Activated B cell treated with CpG ODN at 0.5 μM for 24 hours (primary cell): ENCODE measurements at regions of chr9 and their contacts with region 1.

Region 1: DNA sequence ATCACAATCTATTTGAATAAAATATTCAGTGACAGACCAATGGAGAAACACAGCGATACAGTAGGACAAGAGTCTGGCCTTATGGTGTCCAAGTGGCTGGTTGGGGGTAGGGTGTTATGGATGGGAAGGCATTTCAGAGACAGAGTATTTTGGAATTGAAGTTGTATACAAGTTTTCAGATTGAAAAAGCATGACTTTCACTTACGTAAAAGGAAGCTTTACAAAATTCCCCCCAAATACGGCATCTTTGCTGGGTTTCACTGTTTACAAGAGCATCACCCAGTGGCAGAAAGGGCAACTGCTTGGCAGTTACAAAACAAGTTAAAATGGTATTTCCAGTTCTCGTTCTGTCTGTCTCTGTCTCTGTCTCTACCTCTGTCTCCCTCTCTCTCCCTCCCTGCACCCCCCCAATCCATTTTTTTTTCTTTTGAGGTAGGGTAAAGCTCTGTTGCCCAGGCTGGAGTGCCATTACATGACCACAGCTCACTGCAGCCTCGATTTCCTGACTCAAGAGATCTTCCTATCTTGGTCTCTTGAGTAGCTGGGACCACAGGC is 86.2 kb downstream of the PTPN3 start:
- DNase-seq: no peak
- ATAC-seq: peak; percentile 53
- H3K4me3 Mint-ChIP-seq: peak overlapping the region; percentile 62
- H3K27ac Mint-ChIP-seq: peak overlapping the region; percentile 89
- H3K4me1 Mint-ChIP-seq: peaks cover 60% of the 10 kb centered on the region
- H3K27me3 Mint-ChIP-seq: peaks cover 3% of the 10 kb centered on the region
- CTCF ChIP-seq: no peak

Region 2: DNA sequence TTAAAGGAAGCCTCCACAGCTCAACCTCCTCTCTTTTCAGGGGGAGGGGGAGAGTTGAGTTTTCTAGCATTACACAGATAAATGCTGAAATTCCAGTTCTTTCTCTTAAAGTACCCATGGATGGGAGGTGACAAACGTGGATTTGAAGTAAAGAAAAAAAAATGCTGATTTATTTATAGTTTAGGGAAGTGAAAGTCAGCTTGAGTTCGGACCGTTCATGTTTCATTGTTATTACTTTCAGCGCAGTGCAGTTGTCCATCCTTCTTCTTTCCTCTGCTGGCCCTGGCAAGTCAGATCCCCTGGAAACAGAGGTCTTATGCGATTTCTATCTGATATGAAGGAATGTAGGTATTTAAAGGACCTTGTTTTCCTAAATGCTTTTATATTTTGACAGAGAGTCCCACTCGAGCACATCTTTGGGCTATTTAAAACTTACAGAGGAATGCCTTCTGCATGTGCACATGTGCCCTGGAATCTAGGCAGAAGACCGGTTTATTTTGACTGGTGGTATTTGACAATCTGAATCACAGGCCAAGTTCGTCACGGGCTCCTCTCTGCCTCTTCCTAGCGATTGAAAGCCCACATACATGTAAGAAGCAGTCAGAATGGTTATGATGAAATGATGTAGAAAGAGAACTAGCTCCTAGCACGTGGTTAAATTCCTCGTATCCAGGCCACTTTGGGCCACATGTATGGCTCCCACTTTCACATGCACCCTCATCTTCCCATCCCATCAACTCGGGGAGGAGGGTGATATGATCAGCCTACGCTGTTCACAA is 1537.1 kb before region 1 on chr9:
- CTCF ChIA-PET with region 1: no interaction called
- POLR2A ChIA-PET with region 1: no interaction called
- intact Hi-C with region 1: loop called (anchors 10 kb)
- DNase-seq: no peak
- ATAC-seq: peak; percentile 65
- H3K4me3 Mint-ChIP-seq: peak overlapping the region; percentile 59
- H3K27ac Mint-ChIP-seq: peak overlapping the region; percentile 56
- H3K4me1 Mint-ChIP-seq: peaks cover 81% of the 10 kb centered on the region
- H3K27me3 Mint-ChIP-seq: no peaks in the 10 kb centered on the region
- CTCF ChIP-seq: no peak

Region 3: GRCh38 chr9:109012876-109013678 is 398.8 kb before region 1 on chr9 and contains the start of gene CTNNAL1:
- CTCF ChIA-PET with region 1: no interaction called
- POLR2A ChIA-PET with region 1: interaction called, 11 read pairs
- intact Hi-C with region 1: no loop called
- DNase-seq: peak; percentile 88
- ATAC-seq: peak; percentile 96
- H3K4me3 Mint-ChIP-seq: peak within 1 kb of the TSS; percentile 92
- H3K27ac Mint-ChIP-seq: peak within 1 kb of the TSS; percentile 72
- H3K4me1 Mint-ChIP-seq: peaks cover 38% of the 10 kb centered on the region
- H3K27me3 Mint-ChIP-seq: peaks cover 9% of the 10 kb centered on the region
- CTCF ChIP-seq: no peak
- total RNA-seq, gene CTNNAL1: 1.9 and 2.4 TPM in 2 replicates

Region 4: DNA sequence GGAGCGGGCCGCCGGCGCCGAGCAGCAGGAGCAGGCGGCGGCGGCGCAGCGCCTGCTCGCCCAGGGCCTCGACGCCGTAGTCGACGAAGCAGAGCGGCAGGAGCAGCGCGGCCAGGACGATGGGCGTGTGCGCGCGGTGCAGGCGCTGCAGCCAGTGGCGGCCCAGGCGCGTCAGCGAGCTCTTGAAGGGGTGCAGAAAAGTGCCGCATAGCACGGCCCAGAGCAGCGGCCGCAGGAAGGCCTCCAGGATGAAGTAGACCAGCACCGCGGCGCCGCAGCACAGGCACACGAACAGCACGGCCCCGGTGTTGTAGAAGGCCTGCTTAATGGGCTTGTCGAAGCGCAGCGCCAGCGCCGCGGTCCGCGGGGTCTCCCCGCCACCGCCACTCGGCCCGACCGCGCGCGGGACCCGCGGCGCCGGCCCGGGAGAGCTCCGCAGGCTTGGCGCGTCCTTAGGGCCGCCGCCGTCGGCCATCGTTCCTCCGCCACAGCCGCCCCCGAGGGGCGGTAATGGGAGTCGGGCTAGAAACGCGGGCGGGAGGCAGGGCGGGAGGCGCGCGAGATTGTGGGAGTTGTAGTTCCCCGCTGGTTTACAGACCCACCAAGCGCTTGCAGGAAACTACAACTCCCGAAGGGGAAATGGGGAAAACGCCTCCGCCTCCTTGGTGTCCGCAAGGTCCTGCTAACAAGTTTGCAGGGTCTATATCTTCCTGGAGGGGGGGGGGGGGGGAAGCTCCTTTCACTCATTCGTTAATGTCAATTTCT is 292.3 kb before region 1 on chr9 and contains the start of gene TMEM245:
- CTCF ChIA-PET with region 1: no interaction called
- POLR2A ChIA-PET with region 1: interaction called, 4 read pairs
- intact Hi-C with region 1: loop called (anchors 2 kb)
- DNase-seq: peak; percentile 86
- ATAC-seq: peak; percentile 95
- H3K4me3 Mint-ChIP-seq: peak within 1 kb of the TSS; percentile 88
- H3K27ac Mint-ChIP-seq: peak within 1 kb of the TSS; percentile 82
- H3K4me1 Mint-ChIP-seq: peaks cover 36% of the 10 kb centered on the region
- H3K27me3 Mint-ChIP-seq: no peaks in the 10 kb centered on the region
- CTCF ChIP-seq: no peak
- total RNA-seq, gene TMEM245: 16.1 and 20.6 TPM in 2 replicates

Region 5: DNA sequence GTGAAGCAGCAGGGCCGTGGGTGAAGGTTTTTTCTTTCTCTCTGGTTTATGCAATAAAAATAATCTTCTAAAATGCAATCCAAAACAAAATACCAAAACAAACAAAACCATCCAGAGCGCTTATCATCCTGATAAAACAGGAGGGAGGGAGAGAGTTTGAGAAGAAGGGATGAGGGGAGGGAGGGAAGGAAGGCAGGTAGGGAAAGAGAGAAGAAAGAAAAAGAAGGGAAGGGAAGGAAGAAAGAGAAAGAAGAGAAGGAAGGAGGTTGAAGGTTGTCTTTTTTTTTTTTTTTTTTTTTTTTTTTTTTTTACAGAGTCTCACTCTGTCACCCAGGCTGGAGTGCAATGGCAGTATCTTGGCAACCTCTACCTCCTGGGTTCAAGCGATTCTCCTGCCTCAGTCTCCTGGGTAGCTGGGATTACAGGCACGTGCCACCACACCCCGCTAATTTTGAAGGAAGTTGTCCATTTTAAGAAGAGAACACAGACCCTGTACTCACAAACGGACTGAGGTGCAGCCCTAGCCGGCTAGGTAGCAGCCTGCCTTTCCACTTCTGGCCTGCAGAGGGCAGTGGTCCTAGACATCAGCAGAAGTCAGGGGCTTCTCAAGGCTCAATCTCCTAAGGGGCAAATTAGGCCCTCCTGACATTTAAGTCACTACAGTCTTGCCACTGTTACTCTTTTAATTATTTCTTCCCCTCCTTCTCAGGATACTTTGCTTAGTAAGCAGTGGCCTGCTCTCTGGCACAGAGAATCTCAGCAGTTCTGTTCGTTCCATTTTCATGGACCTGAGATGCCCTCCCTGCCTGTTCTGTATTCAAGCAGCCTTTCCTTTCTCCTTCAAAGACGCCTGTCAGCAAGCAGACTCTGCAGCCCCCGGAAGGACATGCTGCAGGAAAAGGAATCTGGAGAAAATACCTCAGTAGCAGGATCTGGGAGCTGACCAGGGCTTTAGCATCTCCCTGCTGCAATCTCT is 167.4 kb before region 1 on chr9:
- CTCF ChIA-PET with region 1: interaction called, 3 read pairs
- POLR2A ChIA-PET with region 1: no interaction called
- intact Hi-C with region 1: loop called (anchors 1 kb)
- DNase-seq: peak; percentile 42
- ATAC-seq: peak; percentile 88
- H3K4me3 Mint-ChIP-seq: no peak overlapping the region
- H3K27ac Mint-ChIP-seq: no peak overlapping the region
- H3K4me1 Mint-ChIP-seq: peaks cover 4% of the 10 kb centered on the region
- H3K27me3 Mint-ChIP-seq: peaks cover 13% of the 10 kb centered on the region
- CTCF ChIP-seq: peak; percentile 48

Region 6: DNA sequence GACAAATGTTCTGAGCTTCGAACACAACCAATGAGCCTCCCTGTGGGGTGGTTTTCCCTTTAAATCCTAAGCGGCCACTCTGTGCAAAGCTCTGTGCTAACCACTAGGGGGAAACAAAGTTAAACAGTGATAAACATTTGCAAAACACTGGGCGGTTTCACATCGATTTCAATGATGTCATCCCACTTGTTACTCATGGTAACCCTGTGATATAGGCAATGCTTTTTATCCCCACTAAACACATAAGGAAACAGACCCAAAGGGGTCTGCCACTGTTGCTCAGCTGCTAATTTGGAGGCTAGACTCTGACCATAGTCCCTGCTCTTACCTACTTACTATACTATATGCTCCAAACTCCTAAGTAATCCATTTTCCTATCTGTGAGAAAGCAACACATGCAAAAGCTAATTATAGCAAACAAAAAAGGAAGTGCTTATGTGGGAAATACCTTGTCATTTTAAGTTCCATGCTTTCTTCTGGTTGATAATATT is 29.0 kb after region 1 on chr9:
- CTCF ChIA-PET with region 1: interaction called, 5 read pairs
- POLR2A ChIA-PET with region 1: interaction called, 4 read pairs
- intact Hi-C with region 1: loop called (anchors 1 kb)
- DNase-seq: no peak
- ATAC-seq: peak; percentile 78
- H3K4me3 Mint-ChIP-seq: no peak overlapping the region
- H3K27ac Mint-ChIP-seq: no peak overlapping the region
- H3K4me1 Mint-ChIP-seq: peaks cover 23% of the 10 kb centered on the region
- H3K27me3 Mint-ChIP-seq: peaks cover 24% of the 10 kb centered on the region
- CTCF ChIP-seq: no peak